ENCODE measurements at regions of chr12 and their contacts with region 1.

Region 1: DNA sequence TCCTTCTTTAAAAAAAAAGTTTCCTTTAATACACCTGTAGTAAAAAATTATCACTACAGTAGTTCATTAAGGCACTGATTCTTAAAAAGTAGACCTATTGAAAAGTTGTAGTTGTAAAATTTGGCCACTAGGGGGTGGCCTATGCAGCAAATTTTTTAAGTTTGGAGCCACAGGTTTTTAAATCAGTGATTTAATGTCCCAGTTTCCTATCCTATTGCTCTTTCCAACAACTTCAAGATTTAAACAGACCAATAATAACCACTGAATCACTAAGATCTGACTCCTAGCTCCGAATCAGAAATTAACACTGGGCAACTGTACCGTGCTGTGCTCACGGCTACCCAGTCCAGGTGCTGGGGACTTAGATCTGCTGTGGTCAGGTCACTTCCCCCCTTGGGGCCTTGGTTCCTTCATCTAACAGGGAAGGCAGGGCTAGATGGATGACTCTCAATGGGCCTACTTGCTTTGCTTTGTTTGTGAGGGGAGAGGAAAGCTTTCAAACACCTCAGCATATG is 279.3 kb downstream of the MED13L start:
- DNase-seq: no peak
- H3K4me3 Mint-ChIP-seq: no peak overlapping the region
- H3K27ac Mint-ChIP-seq: no peak overlapping the region
- H3K4me1 Mint-ChIP-seq: peaks cover 5% of the 10 kb centered on the region
- H3K27me3 Mint-ChIP-seq: no peaks in the 10 kb centered on the region

Region 2: DNA sequence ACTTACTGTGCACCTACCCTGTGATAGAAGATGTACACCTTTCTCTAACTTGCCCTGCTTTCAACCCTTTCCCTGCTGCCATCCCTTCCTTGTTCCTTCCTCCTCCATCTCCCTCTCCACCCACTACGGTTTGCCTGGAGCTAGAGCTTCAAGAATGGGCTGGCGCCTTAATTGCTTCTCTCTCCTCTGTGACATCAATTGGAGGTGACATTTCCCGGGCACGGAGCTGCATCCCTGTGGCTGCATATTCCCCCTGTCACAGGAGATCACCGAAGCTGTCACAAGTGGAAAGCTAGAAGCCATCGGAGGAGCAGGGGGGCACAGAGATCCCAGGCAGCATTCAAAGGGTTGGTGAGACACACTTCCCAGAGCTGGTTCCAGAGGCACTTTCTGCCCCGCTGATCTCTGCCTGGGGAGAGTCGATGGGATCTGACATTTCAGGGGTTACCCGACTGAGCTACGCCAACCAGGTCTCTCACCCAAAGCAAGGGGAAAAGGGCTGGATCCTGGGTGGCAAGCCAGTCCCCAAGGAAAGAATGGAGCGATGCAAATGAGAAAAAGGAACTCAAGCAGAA is 325.6 kb before region 1 on chr12:
- intact Hi-C with region 1: no loop called
- DNase-seq: no peak
- H3K4me3 Mint-ChIP-seq: no peak overlapping the region
- H3K27ac Mint-ChIP-seq: no peak overlapping the region
- H3K4me1 Mint-ChIP-seq: no peaks in the 10 kb centered on the region
- H3K27me3 Mint-ChIP-seq: no peaks in the 10 kb centered on the region

Region 3: DNA sequence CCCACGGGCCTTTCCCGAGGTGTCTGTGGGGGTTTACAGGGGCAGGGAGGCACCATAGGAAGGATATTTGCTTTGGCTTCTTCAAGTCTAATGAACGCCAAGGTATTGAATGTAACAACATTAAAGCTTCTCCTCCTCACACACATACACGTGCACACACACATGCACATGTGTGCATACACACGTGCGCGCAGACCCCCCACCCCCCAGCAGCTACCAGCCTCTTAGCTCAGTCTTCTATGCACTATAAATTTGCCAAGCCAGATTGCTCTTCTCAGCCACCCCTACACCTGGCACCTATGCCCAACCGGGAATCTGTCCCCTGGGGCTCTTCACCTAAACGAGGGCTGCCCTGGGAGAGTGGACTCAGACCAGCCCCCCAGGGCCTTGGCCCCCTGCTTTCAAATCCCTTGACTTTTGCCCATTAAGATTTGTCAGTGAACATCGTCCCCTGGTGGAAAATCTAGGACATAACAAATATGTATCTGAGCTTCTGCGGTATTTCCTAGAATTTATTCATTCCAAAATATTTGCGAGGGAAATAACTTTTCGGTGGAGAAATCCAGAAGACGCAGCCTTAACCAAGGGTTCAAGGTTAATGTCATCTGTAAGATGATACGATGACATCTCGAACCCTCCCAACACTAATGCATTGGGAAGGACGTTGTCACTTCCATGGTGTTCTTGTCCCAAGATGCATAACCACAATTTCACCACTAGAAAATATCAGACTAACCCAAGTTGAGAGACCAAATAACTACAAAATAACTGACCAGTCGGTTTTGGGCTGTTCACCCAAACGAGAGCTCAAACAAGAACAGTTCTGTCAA is 51.1 kb before region 1 on chr12:
- intact Hi-C with region 1: no loop called
- DNase-seq: no peak
- H3K4me3 Mint-ChIP-seq: no peak overlapping the region
- H3K27ac Mint-ChIP-seq: no peak overlapping the region
- H3K4me1 Mint-ChIP-seq: no peaks in the 10 kb centered on the region
- H3K27me3 Mint-ChIP-seq: no peaks in the 10 kb centered on the region

Region 4: DNA sequence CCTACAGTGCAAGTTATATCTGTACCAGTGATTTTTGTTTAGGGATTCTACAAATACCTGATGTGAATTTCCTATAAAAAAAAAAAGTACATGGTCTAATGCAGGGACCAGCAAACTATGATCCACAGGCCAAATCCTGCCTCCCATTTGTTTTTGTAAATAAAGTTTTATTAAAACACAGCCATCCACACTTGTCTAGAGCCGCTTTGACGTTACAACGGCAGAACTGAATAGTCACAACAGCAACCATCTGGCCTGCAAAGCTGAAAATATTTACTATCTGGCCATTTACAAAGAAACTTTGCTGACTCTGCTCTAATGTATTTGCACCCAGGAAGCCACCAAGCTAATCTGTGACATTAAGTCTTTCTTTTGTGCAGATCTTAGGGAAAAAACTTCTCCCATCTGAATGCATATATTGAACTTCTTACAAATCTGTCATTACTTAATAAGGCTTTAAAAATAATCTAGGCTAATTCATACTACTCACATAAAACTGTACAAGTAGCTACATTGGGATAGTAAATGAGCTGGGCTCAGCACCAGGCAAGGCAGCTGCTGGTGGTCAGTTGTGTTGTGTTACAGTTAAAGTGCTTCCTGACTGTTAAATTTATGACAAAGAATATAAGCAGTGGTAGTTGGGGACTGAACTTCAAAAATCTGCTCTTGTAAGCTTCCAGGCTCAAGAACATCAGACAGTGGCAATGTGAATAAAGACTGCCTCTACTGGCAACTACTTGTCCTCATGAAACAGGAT is 24.0 kb before region 1 on chr12:
- intact Hi-C with region 1: no loop called
- DNase-seq: no peak
- H3K4me3 Mint-ChIP-seq: no peak overlapping the region
- H3K27ac Mint-ChIP-seq: no peak overlapping the region
- H3K4me1 Mint-ChIP-seq: no peaks in the 10 kb centered on the region
- H3K27me3 Mint-ChIP-seq: no peaks in the 10 kb centered on the region

Region 5: DNA sequence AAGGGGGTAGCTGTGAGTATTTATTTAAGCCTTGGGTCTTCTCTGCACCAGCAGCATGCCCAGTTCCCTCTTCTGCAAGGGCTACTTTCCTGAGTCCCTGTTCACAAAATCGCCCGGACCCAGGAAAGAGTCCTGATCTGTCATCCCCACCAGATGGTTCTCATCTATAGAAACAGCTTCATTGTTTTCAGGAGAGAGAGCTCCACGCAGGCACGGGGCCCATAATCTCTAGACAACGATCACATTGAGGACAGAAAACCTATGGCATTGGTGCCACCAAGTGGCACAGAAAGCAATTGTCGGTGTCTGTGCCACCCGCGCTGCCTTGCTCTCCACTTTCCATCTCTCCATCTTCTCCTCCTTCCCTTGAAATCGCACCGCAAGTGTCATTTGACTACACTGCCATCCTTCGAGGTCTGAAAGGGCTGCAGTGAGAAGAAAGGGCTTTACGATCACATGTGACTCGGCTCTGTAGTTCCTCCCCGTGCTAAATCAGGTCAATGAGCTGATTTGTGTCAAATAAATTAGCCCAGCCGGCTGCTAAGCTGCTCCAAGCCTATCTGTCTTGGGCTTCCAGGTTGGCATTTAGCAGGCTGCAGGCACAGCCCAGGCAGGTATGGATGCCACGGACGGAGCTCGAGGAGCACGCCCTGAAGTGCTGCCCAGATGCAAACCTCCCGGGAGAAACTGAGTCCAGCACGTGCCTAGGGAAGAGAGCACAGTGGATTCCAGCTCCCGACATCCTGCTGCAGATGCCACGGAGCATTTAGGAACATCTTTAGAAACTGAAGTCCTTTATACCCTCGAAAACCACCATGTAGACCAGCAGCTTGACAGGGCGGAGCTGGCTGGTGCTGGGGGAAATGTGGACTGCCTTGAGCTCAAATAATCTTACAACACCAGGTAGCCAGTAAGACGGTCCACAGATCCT is 710.9 kb after region 1 on chr12:
- intact Hi-C with region 1: loop called (anchors 2 kb)
- DNase-seq: peak; percentile 19
- H3K4me3 Mint-ChIP-seq: no peak overlapping the region
- H3K27ac Mint-ChIP-seq: no peak overlapping the region
- H3K4me1 Mint-ChIP-seq: peaks cover 7% of the 10 kb centered on the region
- H3K27me3 Mint-ChIP-seq: peaks cover 26% of the 10 kb centered on the region

Measured in activated T-helper 2 cell treated with anti-CD3 and anti-CD28 coated beads, Interferon-gamma antibody, Interleukin-2, Interleukin-4, amounts not matched to agents 10 μg/mL and 5 μg/mL and 100 μg/mL, durations not matched to agents 14 hours and 24 hours and 36 hours (primary cell).